Pancreas (tissue), 10 donors: ENCODE measurements at regions of chr2 and their contacts with region 1.

Region 1: GRCh38 chr2:10659898-10660568 is 29.7 kb downstream of the NOL10 start:
- DNase-seq: peak in 4 of 6 donors; percentile 14 to 47 (median 38)
- ATAC-seq: peak; percentile 60 to 85 (median 80)
- H3K4me3 ChIP-seq: no peak overlapping the region
- H3K27ac ChIP-seq: no peak overlapping the region
- H3K4me1 ChIP-seq: no peaks in the 10 kb centered on the region
- H3K27me3 ChIP-seq: no peaks in the 10 kb centered on the region
- CTCF ChIP-seq: peak; percentile 29 to 57 (median 46)

Region 2: DNA sequence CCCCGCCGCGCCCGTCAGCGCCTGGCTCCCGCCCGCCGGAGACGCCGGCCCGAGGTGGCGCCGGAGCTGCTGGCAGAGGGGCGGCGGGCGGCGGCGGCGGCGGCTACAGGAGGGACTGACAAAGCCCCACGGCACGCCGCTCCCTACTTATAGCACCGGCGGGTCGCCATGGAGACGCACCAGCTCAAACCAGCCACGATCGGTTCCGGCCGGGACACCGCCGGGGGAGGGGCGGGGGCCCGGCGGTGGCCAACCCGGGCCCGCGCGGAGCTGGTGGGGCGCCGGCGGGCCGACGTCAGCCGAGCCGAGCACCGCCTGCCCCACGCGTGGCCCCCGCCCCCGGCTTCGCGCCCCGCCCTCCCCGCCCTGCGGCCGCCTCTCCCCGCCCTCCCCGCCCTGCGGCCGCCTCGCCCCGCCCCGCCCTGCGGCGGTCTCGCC is 211.8 kb before region 1 on chr2 and contains the start of gene ODC1:
- intact Hi-C with region 1: loop called in 1 of 3 experiments (anchors 10 kb)
- DNase-seq: peak; percentile 94 to 99 (median 98)
- ATAC-seq: peak; percentile 80 to 86 (median 84)
- H3K4me3 ChIP-seq: peak within 1 kb of the TSS; percentile 47 to 71 (median 54)
- H3K27ac ChIP-seq: peak within 1 kb of the TSS; percentile 91 to 97 (median 94)
- H3K4me1 ChIP-seq: peaks cover 9 to 25% (median 16%) of the 10 kb centered on the region in 3 donors
- H3K27me3 ChIP-seq: no peaks in the 10 kb centered on the region
- CTCF ChIP-seq: no peak
- total RNA-seq, gene ODC1: 12.9 to 52.2 (median 28.5) TPM

Region 3: DNA sequence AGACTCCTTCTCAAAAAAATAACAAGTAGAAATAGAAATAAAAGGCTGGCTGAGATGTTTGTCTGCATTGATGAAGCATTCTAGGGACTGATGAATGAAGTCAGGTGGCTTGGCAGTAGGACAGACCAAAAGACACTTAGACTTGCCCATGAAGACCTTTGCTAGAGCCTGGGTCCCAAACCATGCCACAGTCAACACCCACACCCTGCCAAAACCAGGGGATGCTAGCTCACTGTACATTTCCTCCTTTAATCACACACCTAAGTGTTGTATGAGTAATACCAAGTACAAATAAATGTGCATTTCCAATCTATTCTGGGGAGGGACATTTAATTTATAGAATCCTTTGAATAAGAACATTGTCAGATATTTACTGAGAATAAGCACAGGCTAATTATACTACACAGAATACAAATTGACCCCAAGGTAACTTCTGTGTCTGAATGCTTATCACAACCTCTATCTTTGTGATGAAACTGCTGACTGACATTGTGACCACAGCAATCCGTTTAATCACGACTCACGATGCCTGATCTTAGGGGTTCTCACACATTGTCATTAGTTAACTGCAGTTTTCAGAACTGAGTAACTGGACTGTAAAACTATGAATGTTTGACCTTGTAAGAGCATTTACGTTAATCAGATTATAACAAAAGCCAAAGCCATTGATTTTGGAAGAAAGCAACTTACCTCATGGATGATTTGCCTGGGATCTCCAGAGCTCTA is 40.2 kb after region 1 on chr2:
- intact Hi-C with region 1: no loop called
- DNase-seq: no peak
- ATAC-seq: no peak
- H3K4me3 ChIP-seq: no peak overlapping the region
- H3K27ac ChIP-seq: no peak overlapping the region
- H3K4me1 ChIP-seq: no peaks in the 10 kb centered on the region
- H3K27me3 ChIP-seq: no peaks in the 10 kb centered on the region
- CTCF ChIP-seq: no peak

Region 4: GRCh38 chr2:10733575-10733943 is 73.5 kb after region 1 on chr2:
- intact Hi-C with region 1: no loop called
- DNase-seq: no peak
- ATAC-seq: no peak
- H3K4me3 ChIP-seq: no peak overlapping the region
- H3K27ac ChIP-seq: no peak overlapping the region
- H3K4me1 ChIP-seq: no peaks in the 10 kb centered on the region
- H3K27me3 ChIP-seq: no peaks in the 10 kb centered on the region
- CTCF ChIP-seq: no peak

Region 5: GRCh38 chr2:10846110-10846861 is 186.3 kb after region 1 on chr2:
- intact Hi-C with region 1: no loop called
- DNase-seq: no peak
- ATAC-seq: no peak
- H3K4me3 ChIP-seq: no peak overlapping the region
- H3K27ac ChIP-seq: no peak overlapping the region
- H3K4me1 ChIP-seq: no peaks in the 10 kb centered on the region
- H3K27me3 ChIP-seq: no peaks in the 10 kb centered on the region
- CTCF ChIP-seq: no peak